GM10248 (cell line): ENCODE measurements at regions of chr10 and their contacts with region 1.

Region 1: GRCh38 chr10:82653244-82654155 is 778.5 kb downstream of the NRG3 start:
- DNase-seq: no peak
- CTCF ChIP-seq: no peak

Region 2: DNA sequence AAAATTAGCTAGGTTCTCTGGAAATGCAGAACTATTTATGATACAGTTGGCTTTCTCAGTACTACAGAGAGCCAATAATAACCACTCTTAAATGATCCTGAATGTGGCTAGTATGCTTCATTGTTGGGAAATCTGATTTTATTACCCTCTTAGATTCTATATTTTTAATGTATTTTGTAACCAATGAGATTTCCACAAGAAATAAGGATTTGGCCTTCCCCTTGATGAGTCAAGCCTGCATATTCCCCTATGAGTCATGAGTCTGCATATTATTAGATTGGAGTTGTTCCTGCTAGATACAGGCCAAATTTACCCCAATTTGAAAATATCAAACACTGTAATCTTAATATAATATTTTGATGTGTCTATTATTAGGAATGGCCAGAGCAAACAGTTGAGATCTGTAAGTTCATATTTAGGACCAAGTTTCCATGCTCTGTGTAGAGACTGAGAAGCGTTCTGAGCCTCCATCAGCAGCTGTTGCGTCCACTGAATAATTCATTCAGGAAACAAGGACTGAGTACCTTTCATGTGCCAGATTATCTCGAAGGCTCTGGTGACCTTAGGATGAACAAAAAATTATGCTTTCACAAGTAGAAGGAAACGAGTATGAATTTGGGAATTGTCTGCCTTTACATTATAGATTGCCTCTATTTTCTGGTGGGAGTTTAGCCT is 14.9 kb after region 1 on chr10:
- CTCF ChIA-PET with region 1: interaction called, 13 read pairs
- POLR2A ChIA-PET with region 1: no interaction called
- DNase-seq: no peak
- CTCF ChIP-seq: no peak